Ascending aorta (tissue), 2 donors: ENCODE measurements at regions of chr15 and their contacts with region 1.

Region 1: DNA sequence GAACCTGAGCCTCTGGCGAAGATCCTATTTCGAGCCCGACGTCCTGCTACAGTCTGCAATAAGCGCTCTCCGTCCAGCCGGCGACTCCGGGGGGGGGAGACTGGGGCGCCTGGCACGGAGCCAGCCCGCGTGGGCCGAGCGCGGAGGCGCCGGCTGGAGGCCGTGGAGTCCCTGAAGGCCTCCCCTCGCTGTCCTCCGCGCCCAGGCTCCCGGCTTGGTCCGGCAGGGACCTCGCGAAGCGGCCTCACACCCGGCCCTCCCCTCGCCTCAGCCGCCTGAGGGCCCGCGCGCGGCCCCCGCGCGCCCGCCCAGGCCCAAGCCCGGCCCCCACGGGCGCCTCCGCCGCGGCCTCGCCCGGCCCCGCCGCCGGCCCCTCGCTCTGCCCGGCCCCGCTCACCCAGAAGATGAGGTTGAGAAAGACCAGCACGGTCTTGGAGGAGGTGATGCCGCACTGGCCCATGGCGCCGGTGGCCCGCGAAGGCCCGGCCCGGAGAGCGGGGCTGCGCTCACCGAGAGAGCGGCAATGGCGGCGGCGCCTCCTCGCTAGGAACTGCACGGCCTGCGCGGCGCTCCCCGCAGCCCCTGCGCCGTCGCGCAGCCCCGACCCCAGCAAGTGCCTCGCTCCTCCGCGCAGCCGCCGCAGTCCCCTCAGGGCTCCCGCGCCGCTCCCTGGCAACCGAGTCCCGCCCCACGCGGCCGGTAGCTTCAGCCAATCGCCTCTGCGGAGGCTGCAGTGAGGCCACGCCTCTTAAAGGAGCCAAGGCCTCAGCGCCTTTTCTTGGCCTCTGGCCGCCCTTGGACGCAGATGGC is at the start of gene TSPAN3:
- DNase-seq: peak; percentile 65 to 96
- H3K4me3 ChIP-seq: peak within 1 kb of the TSS; percentile 88 to 93
- H3K27ac ChIP-seq: peak within 1 kb of the TSS; percentile 87 to 95
- H3K4me1 ChIP-seq: peaks cover 3 to 17% of the 10 kb centered on the region in 2 donors
- H3K27me3 ChIP-seq: no peaks in the 10 kb centered on the region
- CTCF ChIP-seq: no peak
- total RNA-seq, gene TSPAN3: 98.2 TPM

Region 2: DNA sequence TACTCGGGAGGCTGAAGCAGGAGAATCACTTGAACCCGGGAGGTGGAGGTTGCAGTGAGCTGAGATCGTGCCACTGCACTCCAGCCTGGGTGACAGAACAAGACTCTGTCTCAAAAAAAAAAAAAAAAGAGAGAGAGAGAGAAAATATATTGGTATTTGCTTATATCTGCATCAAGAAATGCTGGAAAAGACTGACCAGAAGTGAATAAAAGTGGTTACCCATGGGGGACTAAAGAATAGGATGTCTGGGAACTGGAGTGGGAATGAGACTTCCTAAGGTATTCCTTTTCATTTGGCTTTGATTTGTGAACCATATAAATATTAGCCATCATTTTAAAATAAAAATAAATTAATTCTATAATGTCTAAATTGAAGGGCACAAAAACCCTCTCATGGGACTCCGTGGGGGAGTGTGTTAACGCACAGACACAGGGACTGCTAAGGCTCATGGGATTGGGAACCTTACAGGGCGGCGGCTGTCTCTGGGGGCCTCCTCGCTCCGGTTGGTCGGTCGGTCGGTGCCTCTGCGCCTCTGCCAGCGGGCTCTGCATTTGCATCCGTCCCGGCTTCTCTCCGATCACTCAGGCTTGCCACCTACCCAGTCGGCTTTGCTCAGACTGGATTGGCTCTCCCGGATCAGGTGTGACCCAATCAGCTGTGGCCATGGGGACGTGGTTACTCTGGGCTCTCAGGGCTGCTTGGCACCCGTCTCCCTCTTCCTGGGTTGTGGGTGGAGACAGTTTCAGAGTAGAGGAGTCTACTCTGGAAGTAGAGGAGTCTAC is 12.9 kb after region 1 on chr15:
- intact Hi-C with region 1: loop called (anchors 1 kb)
- DNase-seq: peak; percentile 33 to 87
- H3K4me3 ChIP-seq: peak overlapping the region; percentile 29 to 54
- H3K27ac ChIP-seq: peak overlapping the region; percentile 27 to 63
- H3K4me1 ChIP-seq: peaks cover 0 to 3% of the 10 kb centered on the region in 2 donors
- H3K27me3 ChIP-seq: no peaks in the 10 kb centered on the region
- CTCF ChIP-seq: no peak